ENCODE measurements at regions of chr7 and their contacts with region 1.

Region 1: DNA sequence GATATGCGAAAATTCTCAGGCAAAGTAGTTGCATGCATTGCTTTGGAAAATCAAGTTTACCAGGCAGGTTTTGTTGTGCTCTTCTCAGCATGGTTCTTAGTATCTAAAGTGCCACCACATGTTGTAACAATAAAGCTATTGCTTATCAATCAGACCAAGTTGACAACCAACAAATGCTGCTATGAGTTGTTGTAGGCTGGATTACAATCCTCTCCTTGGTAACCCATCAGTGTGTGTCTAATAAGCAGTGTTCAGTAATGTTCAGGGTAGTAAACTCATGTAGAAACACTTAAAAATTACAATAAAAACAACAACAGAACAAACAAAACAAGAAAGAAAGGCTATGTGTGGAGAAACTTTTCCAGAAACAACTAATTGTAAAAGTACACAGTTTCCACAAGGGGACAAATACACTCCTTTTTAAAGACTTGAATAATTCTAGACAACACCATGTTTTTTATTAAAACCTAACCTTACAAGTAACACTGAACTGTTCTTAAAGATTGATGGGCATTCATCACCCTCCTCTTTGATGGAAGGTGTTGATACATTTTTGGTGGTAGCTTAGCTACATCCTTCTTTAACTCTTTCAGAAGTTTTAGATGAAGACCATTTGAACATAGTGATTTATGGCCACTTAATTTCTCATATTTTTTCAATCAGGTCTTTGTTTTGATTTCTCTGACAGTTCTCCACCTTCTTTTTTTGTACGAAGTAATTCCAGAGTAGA is 370.9 kb upstream of the SEMA3A start:
- DNase-seq: no peak
- ATAC-seq: no peak
- H3K4me3 ChIP-seq: no peak overlapping the region
- H3K4me3 Mint-ChIP-seq: no peak overlapping the region
- H3K27ac ChIP-seq: no peak overlapping the region
- H3K27ac Mint-ChIP-seq: no peak overlapping the region
- H3K4me1 ChIP-seq: no peaks in the 10 kb centered on the region
- H3K4me1 Mint-ChIP-seq: no peaks in the 10 kb centered on the region
- H3K27me3 ChIP-seq: no peaks in the 10 kb centered on the region
- H3K27me3 Mint-ChIP-seq: no peaks in the 10 kb centered on the region
- CTCF ChIP-seq: no peak

Region 2: DNA sequence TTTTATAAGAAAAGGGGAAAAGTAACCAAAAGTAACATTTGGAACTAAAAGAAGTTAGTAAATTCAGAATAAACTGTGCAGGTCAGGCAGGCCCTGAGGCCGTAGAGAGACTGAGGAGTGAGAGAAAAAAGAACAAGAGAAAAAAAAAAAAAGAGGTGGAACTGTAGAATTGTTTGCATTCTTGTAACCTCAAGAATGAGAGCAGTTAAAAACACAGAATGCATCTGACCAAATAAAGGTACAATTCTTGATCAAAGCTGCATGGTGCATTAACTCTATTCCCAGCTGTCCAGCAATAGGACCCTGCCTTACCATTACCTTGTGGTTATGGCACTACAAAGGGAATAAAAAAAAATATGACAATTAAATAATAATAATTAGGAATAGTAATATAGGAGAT is 200.8 kb before region 1 on chr7:
- CTCF ChIA-PET with region 1: no interaction called
- POLR2A ChIA-PET with region 1: no interaction called
- intact Hi-C with region 1: no loop called
- DNase-seq: no peak
- ATAC-seq: no peak
- H3K4me3 ChIP-seq: no peak overlapping the region
- H3K4me3 Mint-ChIP-seq: no peak overlapping the region
- H3K27ac ChIP-seq: no peak overlapping the region
- H3K27ac Mint-ChIP-seq: no peak overlapping the region
- H3K4me1 ChIP-seq: no peaks in the 10 kb centered on the region
- H3K4me1 Mint-ChIP-seq: no peaks in the 10 kb centered on the region
- H3K27me3 ChIP-seq: no peaks in the 10 kb centered on the region
- H3K27me3 Mint-ChIP-seq: peaks cover 3% of the 10 kb centered on the region
- CTCF ChIP-seq: no peak

Region 3: DNA sequence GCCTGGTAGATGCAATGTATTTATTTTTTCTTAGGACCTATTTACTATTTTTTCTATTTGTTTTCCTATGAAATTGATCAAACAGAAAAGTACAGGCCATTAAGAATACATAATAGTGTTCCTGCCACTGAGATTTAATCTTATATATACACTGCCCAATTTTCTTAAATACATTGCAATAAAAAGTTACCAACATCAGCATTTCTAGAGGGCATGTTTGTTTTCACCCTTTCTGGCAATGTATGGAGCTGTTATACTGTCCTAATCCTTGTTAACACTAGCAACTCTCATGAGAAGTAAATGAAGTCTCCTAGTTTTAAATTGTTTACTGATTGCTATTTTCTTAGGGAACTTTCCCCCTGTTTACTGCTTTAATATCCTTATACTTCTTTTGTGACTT is 11.8 kb before region 1 on chr7:
- CTCF ChIA-PET with region 1: no interaction called
- POLR2A ChIA-PET with region 1: no interaction called
- intact Hi-C with region 1: loop called in 1 of 2 experiments (anchors 1 kb)
- DNase-seq: no peak
- ATAC-seq: no peak
- H3K4me3 ChIP-seq: no peak overlapping the region
- H3K4me3 Mint-ChIP-seq: no peak overlapping the region
- H3K27ac ChIP-seq: no peak overlapping the region
- H3K27ac Mint-ChIP-seq: no peak overlapping the region
- H3K4me1 ChIP-seq: no peaks in the 10 kb centered on the region
- H3K4me1 Mint-ChIP-seq: no peaks in the 10 kb centered on the region
- H3K27me3 ChIP-seq: no peaks in the 10 kb centered on the region
- H3K27me3 Mint-ChIP-seq: no peaks in the 10 kb centered on the region
- CTCF ChIP-seq: no peak

Measured in CD8-positive, alpha-beta T cell (primary cell).